ENCODE measurements at regions of chr14 and their contacts with region 1.

Region 1: DNA sequence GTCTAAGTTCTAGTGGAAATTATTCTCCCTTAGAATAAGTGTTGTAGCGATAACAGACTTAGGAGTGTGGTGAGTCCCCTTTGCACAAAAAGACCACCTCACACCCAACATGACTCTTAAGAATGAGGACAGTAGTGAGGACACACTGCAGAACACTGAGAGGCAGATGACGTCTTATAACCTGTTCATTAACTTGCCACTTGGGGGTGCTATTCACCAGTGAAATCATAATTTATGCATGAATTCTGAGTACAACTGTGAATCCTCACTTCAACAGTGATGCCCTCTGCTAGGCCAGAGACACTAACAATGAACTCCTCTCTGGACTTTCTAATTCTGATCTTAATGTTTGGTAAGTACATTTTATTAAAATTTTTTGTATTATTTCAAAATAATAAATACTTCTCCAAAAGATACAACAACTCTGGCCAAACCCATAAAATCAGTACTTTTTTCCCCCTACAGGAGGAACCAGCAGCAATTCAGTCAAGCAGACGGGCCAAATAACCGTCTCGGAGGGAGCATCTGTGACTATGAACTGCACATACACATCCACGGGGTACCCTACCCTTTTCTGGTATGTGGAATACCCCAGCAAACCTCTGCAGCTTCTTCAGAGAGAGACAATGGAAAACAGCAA is 274.7 kb downstream of the DAD1 start:
- DNase-seq: no peak
- H3K4me3 ChIP-seq: no peak overlapping the region
- H3K27ac ChIP-seq: no peak overlapping the region
- H3K4me1 ChIP-seq: no peaks in the 10 kb centered on the region
- H3K27me3 ChIP-seq: no peaks in the 10 kb centered on the region
- CTCF ChIP-seq: peak in 2 of 3 donors; percentile 14 to 22
- EP300 ChIP-seq: no peak
- POLR2A ChIP-seq: no peak

Region 2: DNA sequence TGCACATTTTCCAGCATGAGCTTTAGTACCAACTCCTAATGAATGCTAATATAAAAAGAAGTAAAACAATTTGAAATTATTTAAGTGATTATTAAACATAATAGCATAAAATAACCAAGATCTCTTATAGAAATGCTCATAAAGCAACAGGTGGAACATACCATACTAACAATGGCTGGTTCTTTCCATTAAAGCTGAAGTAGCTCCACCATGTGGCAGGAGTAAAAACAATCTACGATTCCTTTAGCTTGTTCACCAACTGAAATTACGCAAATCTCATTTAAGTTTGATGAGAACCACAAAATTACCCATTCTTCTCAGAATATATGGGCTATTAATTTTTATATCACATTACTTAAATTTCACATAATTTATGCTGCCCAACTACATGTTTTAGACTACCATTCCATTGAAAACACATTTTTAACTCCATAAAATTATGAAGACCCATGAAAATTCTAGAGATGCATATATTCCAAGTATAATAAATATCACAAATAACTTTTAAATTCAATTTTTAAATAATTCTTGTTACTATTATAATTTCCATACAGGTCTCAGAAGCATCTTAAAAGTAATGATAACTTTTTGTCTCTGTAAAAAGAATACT is 61.1 kb after region 1 on chr14:
- intact Hi-C with region 1: loop called in 1 of 4 experiments (anchors 10 kb)
- DNase-seq: no peak
- H3K4me3 ChIP-seq: no peak overlapping the region
- H3K27ac ChIP-seq: no peak overlapping the region
- H3K4me1 ChIP-seq: peaks cover 2% of the 10 kb centered on the region
- H3K27me3 ChIP-seq: no peaks in the 10 kb centered on the region
- CTCF ChIP-seq: peak in 2 of 3 donors; percentile 10 to 17
- EP300 ChIP-seq: no peak
- POLR2A ChIP-seq: no peak